MCF 10A (cell line): ENCODE measurements at regions of chr21 and their contacts with region 1.

Region 1: DNA sequence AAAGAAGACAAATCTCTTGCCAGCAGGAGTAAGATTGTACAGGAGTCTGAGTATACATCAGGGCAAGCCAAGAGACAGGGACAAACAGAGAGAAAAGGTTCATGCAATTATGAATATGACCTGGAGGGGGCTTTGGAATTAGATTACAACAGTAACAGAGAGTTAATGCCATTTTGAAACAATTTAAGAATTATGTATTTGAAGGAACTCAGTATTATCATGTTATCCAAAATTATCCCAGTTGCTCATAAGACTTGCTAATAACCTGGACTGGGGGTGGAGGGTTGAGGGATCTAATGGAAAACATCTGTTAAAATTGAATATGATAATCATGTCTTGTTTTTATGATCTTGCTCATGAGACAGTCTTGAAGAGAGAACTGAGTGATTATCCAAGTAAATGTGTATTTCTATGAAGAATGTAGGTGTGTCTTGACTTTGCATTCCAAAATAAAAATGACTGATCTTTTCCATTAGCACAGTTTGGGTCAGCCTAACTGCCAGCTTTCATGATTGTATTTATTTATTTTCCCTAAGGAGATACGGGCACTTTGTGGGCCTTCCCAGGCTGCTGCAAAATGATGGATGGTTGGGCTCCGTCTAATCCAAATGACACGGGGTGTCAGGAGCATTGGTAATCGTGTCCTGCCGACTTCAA is 117.7 kb downstream of the ERG start:
- DNase-seq: peak; percentile 46
- H3K4me3 Mint-ChIP-seq: no peak overlapping the region
- H3K27ac Mint-ChIP-seq: no peak overlapping the region
- H3K4me1 Mint-ChIP-seq: no peaks in the 10 kb centered on the region
- H3K27me3 Mint-ChIP-seq: no peaks in the 10 kb centered on the region
- CTCF ChIP-seq: peak; percentile 14

Region 2: GRCh38 chr21:38486221-38486620 is 105.6 kb after region 1 on chr21:
- CTCF ChIA-PET with region 1: interaction called, 4 read pairs
- POLR2A ChIA-PET with region 1: no interaction called
- intact Hi-C with region 1: loop called (anchors 10 kb)
- DNase-seq: peak; percentile 65
- H3K4me3 Mint-ChIP-seq: no peak overlapping the region
- H3K27ac Mint-ChIP-seq: peak overlapping the region; percentile 89
- H3K4me1 Mint-ChIP-seq: peaks cover 27% of the 10 kb centered on the region
- H3K27me3 Mint-ChIP-seq: no peaks in the 10 kb centered on the region
- CTCF ChIP-seq: no peak